ENCODE measurements at regions of chr3 and their contacts with region 1.

Region 1: GRCh38 chr3:52056968-52057805 is 816 bp upstream of the DUSP7 start:
- DNase-seq: peak; percentile 97
- H3K4me3 ChIP-seq: peak overlapping the region; percentile 65 to 94
- H3K27ac ChIP-seq: peak overlapping the region; percentile 88 to 93
- H3K4me1 ChIP-seq: peaks cover 13 to 66% of the 10 kb centered on the region in 2 experiments
- H3K27me3 ChIP-seq: no peaks in the 10 kb centered on the region
- CTCF ChIP-seq: no peak
- EP300 ChIP-seq: no peak
- RAD21 ChIP-seq: peak; percentile 17; the same call in 1 of the 2 replicates

Region 2: GRCh38 chr3:51995346-51996163 is 61.6 kb before region 1 on chr3 and contains the start of gene RPL29:
- CTCF ChIA-PET with region 1: interaction called, 983 read pairs
- POLR2A ChIA-PET with region 1: interaction called, 13 read pairs
- DNase-seq: peak; percentile 92
- H3K4me3 ChIP-seq: peak within 1 kb of the TSS; percentile 83 to 88
- H3K27ac ChIP-seq: peak within 1 kb of the TSS; percentile 83 to 88
- H3K4me1 ChIP-seq: peaks cover 9 to 24% of the 10 kb centered on the region in 2 experiments; a peak in 3 of 4 replicates
- H3K27me3 ChIP-seq: no peaks in the 10 kb centered on the region
- CTCF ChIP-seq: 0 out of 2 replicates have a peak, but pooled peaks have one; percentile 19
- EP300 ChIP-seq: peak in 1 of 2 experiments; percentile 55; a peak in 1 of 4 replicates
- RAD21 ChIP-seq: peak; percentile 11; the same call in 1 of the 2 replicates
- polyA plus RNA-seq, gene RPL29: 3,173 and 3,642 TPM in 2 replicates

Region 3: GRCh38 chr3:52032702-52033408 is 24.3 kb before region 1 on chr3:
- CTCF ChIA-PET with region 1: interaction called, 163 read pairs
- POLR2A ChIA-PET with region 1: interaction called, 35 read pairs
- DNase-seq: no peak
- H3K4me3 ChIP-seq: no peak overlapping the region; a peak in 1 of 4 replicates
- H3K27ac ChIP-seq: peak overlapping the region in 1 of 2 experiments; percentile 100; a peak in 2 of 4 replicates
- H3K4me1 ChIP-seq: peaks cover 0 to 96% of the 10 kb centered on the region in 2 experiments; a peak in 2 of 4 replicates
- H3K27me3 ChIP-seq: no peaks in the 10 kb centered on the region
- CTCF ChIP-seq: no peak
- EP300 ChIP-seq: peak in 1 of 2 experiments; percentile 57; a peak in 2 of 4 replicates
- RAD21 ChIP-seq: 0 out of 2 replicates have a peak, but pooled peaks have one; percentile 12

Region 4: DNA sequence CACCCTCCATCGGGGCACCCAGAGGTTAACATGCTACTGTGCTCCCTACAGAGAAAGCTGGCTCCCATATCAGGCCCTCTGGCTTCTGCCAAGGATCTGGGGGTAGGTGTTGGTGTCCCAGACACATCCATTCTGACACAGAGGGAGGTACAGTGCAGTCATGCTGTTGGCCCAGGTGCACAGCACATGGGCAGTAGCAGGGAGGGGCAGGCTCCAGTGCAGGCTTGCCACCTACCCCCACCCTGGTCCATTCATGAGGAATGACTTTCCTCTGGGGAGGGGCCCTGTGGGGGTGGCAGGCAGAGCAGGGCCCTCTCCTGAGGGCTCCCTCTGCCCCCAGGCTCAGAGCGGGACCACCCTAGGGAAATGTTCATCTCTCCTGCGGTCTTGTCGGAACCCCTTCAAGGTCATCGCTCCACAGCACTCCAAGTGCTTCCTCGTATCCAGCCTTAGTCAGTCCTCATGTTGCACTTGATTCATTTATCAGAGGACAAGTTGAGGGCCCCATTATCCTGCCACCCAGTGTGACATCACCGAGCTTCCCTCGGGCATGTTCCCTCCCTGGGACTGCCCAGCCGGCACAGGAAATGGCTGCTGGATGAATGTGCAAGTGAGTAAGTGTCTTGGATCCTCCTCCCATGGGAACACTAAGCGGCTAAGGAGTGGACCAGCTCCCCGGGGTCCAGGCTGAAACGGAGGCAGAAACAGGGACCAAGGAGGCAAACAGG is 10.8 kb before region 1 on chr3:
- CTCF ChIA-PET with region 1: interaction called, 163 read pairs
- POLR2A ChIA-PET with region 1: interaction called, 26 read pairs
- DNase-seq: peak; percentile 58
- H3K4me3 ChIP-seq: 0 out of 4 replicates have a peak overlapping the region, but pooled peaks of 1 of the 2 experiments have one; percentile 36
- H3K27ac ChIP-seq: peak overlapping the region; percentile 93 to 100
- H3K4me1 ChIP-seq: peaks cover 31 to 87% of the 10 kb centered on the region in 2 experiments
- H3K27me3 ChIP-seq: no peaks in the 10 kb centered on the region
- CTCF ChIP-seq: no peak
- EP300 ChIP-seq: peak in 1 of 2 experiments; percentile 65; a peak in 1 of 4 replicates
- RAD21 ChIP-seq: no peak

Region 5: DNA sequence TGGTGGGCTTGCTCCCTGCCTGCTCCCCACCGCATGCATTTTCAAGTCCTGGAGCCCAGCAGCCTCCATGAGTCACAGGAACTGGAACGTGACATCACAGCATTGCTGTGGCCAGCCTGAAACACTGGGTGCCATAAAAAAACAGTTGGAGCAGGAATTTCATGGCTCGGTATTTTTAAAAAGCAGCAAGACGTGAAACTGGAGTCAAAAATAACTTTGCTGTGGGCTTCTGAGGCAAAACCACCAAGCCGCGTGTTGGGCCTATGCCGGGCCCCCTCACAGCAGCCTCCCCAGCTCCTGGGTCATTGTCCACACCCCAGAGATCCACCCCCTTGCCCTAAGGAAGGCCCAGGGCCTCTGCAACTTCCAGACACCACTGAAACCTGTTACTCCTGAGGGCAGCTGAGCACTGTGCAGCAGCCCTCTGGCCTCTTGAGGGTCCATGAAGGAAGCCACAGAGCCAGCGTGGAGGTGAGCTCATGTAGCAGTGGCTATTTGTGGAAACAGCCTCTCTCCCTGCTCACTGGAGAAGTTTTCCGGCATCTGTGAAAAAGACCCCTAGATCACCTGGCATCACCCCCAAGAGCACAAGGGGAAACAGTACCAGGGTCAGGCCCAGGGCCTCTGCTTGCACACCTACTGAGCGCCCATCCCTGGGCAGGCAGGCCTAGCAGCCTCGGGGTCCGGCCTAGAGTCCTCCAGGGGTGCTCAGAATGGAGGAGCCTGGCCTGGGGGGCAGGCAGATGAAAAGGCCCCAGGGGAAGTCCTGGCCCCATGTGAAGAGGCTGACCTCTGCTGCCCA is 33.1 kb after region 1 on chr3:
- CTCF ChIA-PET with region 1: interaction called, 12 read pairs
- POLR2A ChIA-PET with region 1: interaction called, 3 read pairs
- DNase-seq: no peak
- H3K4me3 ChIP-seq: no peak overlapping the region
- H3K27ac ChIP-seq: peak overlapping the region; percentile 53 to 93
- H3K4me1 ChIP-seq: peaks cover 28 to 53% of the 10 kb centered on the region in 2 experiments
- H3K27me3 ChIP-seq: no peaks in the 10 kb centered on the region
- CTCF ChIP-seq: no peak
- EP300 ChIP-seq: no peak
- RAD21 ChIP-seq: no peak

Region 6: GRCh38 chr3:52123106-52123725 is 66.0 kb after region 1 on chr3:
- CTCF ChIA-PET with region 1: interaction called, 189 read pairs
- POLR2A ChIA-PET with region 1: interaction called, 22 read pairs
- DNase-seq: peak; percentile 87
- H3K4me3 ChIP-seq: no peak overlapping the region; a peak in 1 of 4 replicates
- H3K27ac ChIP-seq: peak overlapping the region in 1 of 2 experiments; percentile 83; a peak in 2 of 4 replicates
- H3K4me1 ChIP-seq: peaks cover 5 to 33% of the 10 kb centered on the region in 2 experiments; a peak in 2 of 4 replicates
- H3K27me3 ChIP-seq: no peaks in the 10 kb centered on the region
- CTCF ChIP-seq: peak; percentile 96
- EP300 ChIP-seq: no peak
- RAD21 ChIP-seq: peak; percentile 97

Region 7: DNA sequence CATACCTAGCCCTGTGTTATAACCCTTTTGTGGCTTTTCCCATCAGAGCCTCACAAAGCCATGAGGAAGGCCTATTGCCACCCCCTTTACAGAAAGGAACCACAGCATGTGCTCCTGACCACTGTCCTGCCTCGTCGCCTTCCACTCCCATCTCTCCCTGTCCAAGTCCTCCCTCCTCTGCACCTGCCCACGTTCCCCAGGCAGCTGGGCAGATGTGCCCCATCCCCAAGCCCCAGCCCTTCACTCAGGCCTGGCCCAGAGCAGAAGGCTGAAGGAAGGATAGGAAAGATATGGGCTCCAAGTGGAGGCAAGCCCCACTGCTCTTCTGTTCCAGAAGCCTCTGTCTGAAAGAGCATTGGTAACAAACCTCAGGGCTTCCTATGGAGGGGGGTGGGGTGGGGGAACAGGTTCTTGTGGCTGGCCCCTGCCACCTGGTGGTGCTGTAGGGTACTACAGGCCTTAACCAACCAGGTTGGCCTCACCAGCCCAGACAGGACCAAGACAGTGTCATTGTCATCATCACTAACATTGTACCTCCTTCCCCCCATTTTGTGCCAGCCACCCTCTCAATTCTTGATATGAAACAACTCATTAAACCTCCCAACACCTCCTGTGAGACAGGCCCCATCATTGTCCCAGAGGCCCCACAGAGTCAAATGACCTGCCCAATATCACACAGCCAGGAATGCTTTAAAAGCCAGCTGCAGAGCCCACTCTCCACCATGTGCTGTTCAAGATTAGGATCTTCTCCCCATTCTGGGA is 87.0 kb after region 1 on chr3:
- CTCF ChIA-PET with region 1: interaction called, 18 read pairs
- POLR2A ChIA-PET with region 1: interaction called, 4 read pairs
- DNase-seq: peak; percentile 92
- H3K4me3 ChIP-seq: peak overlapping the region in 1 of 2 experiments; percentile 9; a peak in 1 of 4 replicates
- H3K27ac ChIP-seq: peak overlapping the region in 1 of 2 experiments; percentile 77; a peak in 2 of 4 replicates
- H3K4me1 ChIP-seq: peaks cover 0 to 13% of the 10 kb centered on the region in 2 experiments; a peak in 1 of 4 replicates
- H3K27me3 ChIP-seq: no peaks in the 10 kb centered on the region
- CTCF ChIP-seq: peak; percentile 89
- EP300 ChIP-seq: no peak
- RAD21 ChIP-seq: peak; percentile 95

Region 8: GRCh38 chr3:52178537-52178936 is 121.3 kb after region 1 on chr3:
- CTCF ChIA-PET with region 1: no interaction called
- POLR2A ChIA-PET with region 1: no interaction called
- DNase-seq: no peak
- H3K4me3 ChIP-seq: no peak overlapping the region
- H3K27ac ChIP-seq: no peak overlapping the region
- H3K4me1 ChIP-seq: peaks cover 0 to 14% of the 10 kb centered on the region in 2 experiments; a peak in 1 of 4 replicates
- H3K27me3 ChIP-seq: no peaks in the 10 kb centered on the region
- CTCF ChIP-seq: no peak
- EP300 ChIP-seq: no peak
- RAD21 ChIP-seq: no peak